ENCODE measurements at regions of chr18 and their contacts with region 1.

Region 1: GRCh38 chr18:67151366-67151765 is 365.2 kb downstream of the DSEL start:
- DNase-seq: peak in 2 of 10 donors; percentile 38 to 52
- H3K4me3 ChIP-seq: peak overlapping the region in 2 of 59 donors; percentile 1 to 10
- H3K27ac ChIP-seq: peak overlapping the region in 26 of 59 donors; percentile 2 to 74 (median 19)
- H3K27me3 ChIP-seq: no peaks in the 10 kb centered on the region
- CTCF ChIP-seq: peak in 47 of 56 donors; percentile 6 to 67 (median 39)

Region 2: DNA sequence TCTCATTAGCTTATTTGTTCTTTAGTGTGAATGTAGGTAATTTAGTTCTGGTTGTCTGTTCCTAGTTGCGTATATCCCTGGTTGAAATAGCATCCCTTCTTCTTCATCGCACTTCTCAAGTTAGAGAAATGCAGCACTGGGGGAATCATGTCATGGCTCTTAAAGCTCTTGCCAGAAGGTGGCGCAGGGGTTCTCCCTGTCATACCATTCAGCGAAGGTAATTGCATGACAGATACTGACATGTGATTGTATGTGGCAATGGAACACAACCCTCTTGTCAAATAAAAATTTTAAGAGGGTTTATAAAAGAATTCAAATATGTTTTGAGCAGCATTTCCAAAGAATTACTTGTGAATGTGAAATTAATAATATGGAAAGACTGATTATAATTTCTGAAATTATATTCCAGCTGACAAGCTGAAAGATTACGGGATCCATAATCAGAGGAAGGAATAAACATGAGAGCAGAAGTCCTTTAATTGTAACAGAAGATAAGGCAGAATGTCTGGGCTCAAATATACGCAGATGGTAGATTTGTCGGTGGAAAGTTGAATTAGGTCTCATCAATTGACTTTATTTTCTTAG is 46.6 kb before region 1 on chr18:
- intact Hi-C with region 1: loop called in 1 of 2 experiments (anchors 5 kb)
- DNase-seq: peak; percentile 18 to 83 (median 60)
- H3K4me3 ChIP-seq: peak overlapping the region in 13 of 59 donors; percentile 0 to 26 (median 16)
- H3K27ac ChIP-seq: no peak overlapping the region
- H3K27me3 ChIP-seq: no peaks in the 10 kb centered on the region
- CTCF ChIP-seq: peak; percentile 22 to 93 (median 74)

Region 3: GRCh38 chr18:67194886-67195285 is 43.5 kb after region 1 on chr18:
- intact Hi-C with region 1: loop called in 1 of 2 experiments (anchors 5 kb)
- DNase-seq: no peak
- H3K4me3 ChIP-seq: no peak overlapping the region
- H3K27ac ChIP-seq: no peak overlapping the region
- H3K27me3 ChIP-seq: peaks cover 0 to 5% (median 0%) of the 10 kb centered on the region in 45 donors
- CTCF ChIP-seq: no peak